ENCODE measurements at regions of chr6 and their contacts with region 1.

Region 1: GRCh38 chr6:10779076-10779475 is 31.5 kb downstream of the TMEM14B start:
- DNase-seq: no peak
- ATAC-seq: no peak
- H3K4me3 ChIP-seq: no peak overlapping the region
- H3K27ac ChIP-seq: no peak overlapping the region
- H3K4me1 ChIP-seq: no peaks in the 10 kb centered on the region
- H3K27me3 ChIP-seq: no peaks in the 10 kb centered on the region
- CTCF ChIP-seq: no peak
- EP300 ChIP-seq: no peak
- POLR2A ChIP-seq: no peak
- RAD21 ChIP-seq: no peak

Region 2: DNA sequence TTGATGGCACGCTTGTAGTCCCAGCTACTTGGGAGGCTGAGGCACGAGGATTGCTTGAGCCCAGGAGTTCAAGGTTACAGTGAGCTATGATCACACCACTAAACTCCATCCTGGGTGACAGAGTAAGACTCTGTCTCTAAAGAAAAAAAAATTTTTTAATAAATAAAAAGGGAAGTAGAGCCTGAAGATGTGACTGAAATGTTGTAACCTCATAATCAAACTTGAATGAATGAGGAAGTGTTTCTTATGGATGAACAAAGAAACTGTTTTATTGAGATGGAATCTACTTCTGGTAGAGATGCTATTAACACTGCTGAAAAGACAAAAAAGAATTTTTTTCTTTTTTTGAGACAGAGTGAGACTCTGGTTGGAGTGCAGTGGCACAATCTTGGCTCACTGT is 52.5 kb after region 1 on chr6:
- CTCF ChIA-PET with region 1: no interaction called
- POLR2A ChIA-PET with region 1: no interaction called
- RAD21 ChIA-PET with region 1: no interaction called
- SMC1A ChIA-PET with region 1: no interaction called
- in situ Hi-C with region 1: no loop called
- intact Hi-C with region 1: loop called (anchors 2 kb)
- DNase-seq: no peak
- ATAC-seq: no peak
- H3K4me3 ChIP-seq: no peak overlapping the region
- H3K27ac ChIP-seq: no peak overlapping the region
- H3K4me1 ChIP-seq: no peaks in the 10 kb centered on the region
- H3K27me3 ChIP-seq: no peaks in the 10 kb centered on the region
- CTCF ChIP-seq: no peak
- EP300 ChIP-seq: no peak
- POLR2A ChIP-seq: no peak
- RAD21 ChIP-seq: no peak